Right cardiac atrium (tissue), 5 donors: ENCODE measurements at regions of chr3 and their contacts with region 1.

Region 1: GRCh38 chr3:10883478-10884234 is 67.6 kb downstream of the SLC6A11 start:
- DNase-seq: no peak
- ATAC-seq: no peak
- H3K4me3 ChIP-seq: no peak overlapping the region
- H3K27ac ChIP-seq: no peak overlapping the region
- H3K4me1 ChIP-seq: no peaks in the 10 kb centered on the region
- H3K27me3 ChIP-seq: peaks cover 2% of the 10 kb centered on the region

Region 2: DNA sequence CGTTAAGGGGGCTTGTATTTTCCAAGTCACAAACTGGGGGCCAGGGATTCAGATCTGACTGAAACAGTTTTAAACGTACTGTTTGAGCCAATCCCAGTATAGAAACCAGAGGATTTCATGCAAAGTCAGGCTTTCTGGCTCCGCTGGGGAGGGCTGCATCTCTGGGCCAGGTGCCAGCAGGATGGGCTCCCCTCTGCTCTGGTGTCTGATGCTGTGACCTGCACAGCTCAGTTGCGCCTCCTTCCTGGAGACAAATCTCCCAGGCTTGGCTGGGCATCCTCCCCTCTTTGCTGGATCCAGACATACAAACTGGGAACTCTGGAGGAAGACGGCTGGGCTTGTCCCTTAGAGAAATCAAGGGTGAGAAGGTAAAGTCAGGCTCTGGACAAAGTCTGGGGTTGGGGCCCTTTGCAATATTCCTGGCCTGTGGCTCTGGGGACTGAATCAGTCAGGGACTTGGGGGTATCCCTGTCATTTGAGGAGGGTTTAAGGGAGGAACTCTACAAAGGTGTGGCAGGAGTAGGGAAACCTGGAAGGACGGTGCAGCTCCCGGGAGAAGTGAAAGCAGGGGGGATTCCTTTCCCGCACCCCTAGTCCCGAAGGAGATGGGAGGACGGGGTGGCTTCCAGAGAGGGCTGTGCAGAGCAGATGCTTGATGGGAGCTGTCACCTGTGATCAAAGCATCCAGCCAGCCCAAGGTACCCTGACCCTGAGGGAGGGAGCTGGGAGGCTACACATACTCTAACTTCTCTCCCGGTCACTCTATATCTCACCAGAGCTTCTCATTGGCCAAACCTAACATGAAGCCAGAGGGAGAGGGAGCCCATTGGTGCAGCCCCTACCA is 263.4 kb before region 1 on chr3:
- intact Hi-C with region 1: no loop called
- DNase-seq: no peak
- ATAC-seq: no peak
- H3K4me3 ChIP-seq: no peak overlapping the region
- H3K27ac ChIP-seq: no peak overlapping the region
- H3K4me1 ChIP-seq: no peaks in the 10 kb centered on the region
- H3K27me3 ChIP-seq: no peaks in the 10 kb centered on the region

Region 3: GRCh38 chr3:10758304-10759061 is 125.2 kb before region 1 on chr3:
- intact Hi-C with region 1: loop called in 1 of 4 experiments (anchors 2 kb)
- DNase-seq: peak; percentile 46 to 76 (median 61)
- ATAC-seq: peak; percentile 79 to 90
- H3K4me3 ChIP-seq: no peak overlapping the region
- H3K27ac ChIP-seq: no peak overlapping the region
- H3K4me1 ChIP-seq: no peaks in the 10 kb centered on the region
- H3K27me3 ChIP-seq: no peaks in the 10 kb centered on the region

Region 4: GRCh38 chr3:10835406-10835805 is 48.2 kb before region 1 on chr3:
- intact Hi-C with region 1: no loop called
- DNase-seq: no peak
- ATAC-seq: no peak
- H3K4me3 ChIP-seq: no peak overlapping the region
- H3K27ac ChIP-seq: no peak overlapping the region
- H3K4me1 ChIP-seq: no peaks in the 10 kb centered on the region
- H3K27me3 ChIP-seq: no peaks in the 10 kb centered on the region